ENCODE measurements at regions of chr3 and their contacts with region 1.

Region 1: GRCh38 chr3:136734382-136735070 is 17.7 kb downstream of the STAG1 start:
- DNase-seq: peak in 1 of 9 donors; percentile 8
- ATAC-seq: peak; percentile 54
- H3K4me3 ChIP-seq: no peak overlapping the region
- H3K4me3 Mint-ChIP-seq: peak overlapping the region in 5 of 10 donors; percentile 2 to 40 (median 26)
- H3K27ac ChIP-seq: no peak overlapping the region
- H3K27ac Mint-ChIP-seq: peak overlapping the region in 7 of 9 donors; percentile 1 to 83 (median 32)
- H3K4me1 ChIP-seq: peaks cover 20 to 37% of the 10 kb centered on the region in 2 donors
- H3K4me1 Mint-ChIP-seq: peaks cover 43 to 79% (median 62%) of the 10 kb centered on the region in 7 donors
- H3K27me3 ChIP-seq: no peaks in the 10 kb centered on the region
- H3K27me3 Mint-ChIP-seq: no peaks in the 10 kb centered on the region

Region 2: DNA sequence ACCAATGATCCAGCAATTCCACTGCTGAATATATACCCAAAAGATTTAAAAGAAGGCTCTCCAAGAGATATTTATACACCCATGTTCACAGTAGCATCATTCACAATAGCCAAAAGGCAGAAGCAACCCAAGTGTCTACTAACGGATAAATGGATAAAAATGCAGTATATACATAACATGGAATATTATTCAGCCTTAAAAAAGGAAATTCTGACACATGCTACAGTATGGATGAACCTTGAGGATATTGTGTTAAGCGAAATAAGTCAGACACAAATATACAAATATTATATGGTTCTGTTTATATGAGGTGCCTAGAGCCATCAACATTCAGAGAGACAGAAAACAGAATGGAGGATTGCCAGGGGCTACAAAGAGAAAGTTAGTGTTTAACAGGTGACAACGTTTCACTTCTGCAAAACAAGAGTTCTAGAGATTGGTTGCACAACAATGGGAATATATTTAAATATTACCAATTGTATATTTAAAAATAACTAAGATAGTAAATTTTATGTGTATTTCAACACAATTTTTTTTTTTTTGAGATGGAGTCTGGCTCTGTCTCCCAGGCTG is 51.7 kb before region 1 on chr3:
- CTCF ChIA-PET with region 1: no interaction called
- POLR2A ChIA-PET with region 1: no interaction called
- intact Hi-C with region 1: loop called in 1 of 2 experiments (anchors 5 kb)
- DNase-seq: no peak
- ATAC-seq: no peak
- H3K4me3 ChIP-seq: no peak overlapping the region
- H3K4me3 Mint-ChIP-seq: no peak overlapping the region
- H3K27ac ChIP-seq: no peak overlapping the region
- H3K27ac Mint-ChIP-seq: no peak overlapping the region
- H3K4me1 ChIP-seq: no peaks in the 10 kb centered on the region
- H3K4me1 Mint-ChIP-seq: peaks cover 0 to 48% (median 47%) of the 10 kb centered on the region in 7 donors
- H3K27me3 ChIP-seq: no peaks in the 10 kb centered on the region
- H3K27me3 Mint-ChIP-seq: no peaks in the 10 kb centered on the region

Region 3: GRCh38 chr3:136745916-136746315 is 11.4 kb after region 1 on chr3:
- CTCF ChIA-PET with region 1: no interaction called
- POLR2A ChIA-PET with region 1: interaction called, 3 read pairs
- intact Hi-C with region 1: loop called in 1 of 2 experiments (anchors 2 kb)
- DNase-seq: no peak
- ATAC-seq: no peak
- H3K4me3 ChIP-seq: no peak overlapping the region
- H3K4me3 Mint-ChIP-seq: peak overlapping the region in 1 of 10 donors; percentile 45
- H3K27ac ChIP-seq: no peak overlapping the region
- H3K27ac Mint-ChIP-seq: peak overlapping the region in 4 of 9 donors; percentile 7 to 65 (median 42)
- H3K4me1 ChIP-seq: peaks cover 13 to 14% of the 10 kb centered on the region in 2 donors
- H3K4me1 Mint-ChIP-seq: peaks cover 33 to 66% (median 55%) of the 10 kb centered on the region in 7 donors
- H3K27me3 ChIP-seq: no peaks in the 10 kb centered on the region
- H3K27me3 Mint-ChIP-seq: no peaks in the 10 kb centered on the region

Region 4: DNA sequence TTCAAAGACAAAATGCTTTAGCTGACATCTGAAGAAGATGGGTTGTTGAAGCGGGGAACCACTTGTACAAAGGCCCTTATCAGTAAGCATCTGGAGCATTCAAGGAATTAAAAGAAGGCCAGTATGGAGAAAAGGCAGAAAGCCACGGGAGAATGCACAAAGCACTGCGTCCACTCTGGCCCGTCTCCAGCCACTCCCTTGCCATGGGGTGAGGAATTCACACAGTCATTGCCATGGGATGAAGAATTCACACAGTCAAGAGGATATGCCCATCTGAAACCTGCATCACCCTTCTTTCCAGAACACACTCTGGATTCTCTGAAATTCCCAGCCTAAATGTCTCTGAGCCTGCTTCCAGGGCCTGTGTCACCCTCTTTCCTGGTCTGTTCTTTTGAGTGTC is 44.3 kb after region 1 on chr3:
- CTCF ChIA-PET with region 1: no interaction called
- POLR2A ChIA-PET with region 1: no interaction called
- intact Hi-C with region 1: no loop called
- DNase-seq: no peak
- ATAC-seq: no peak
- H3K4me3 ChIP-seq: no peak overlapping the region
- H3K4me3 Mint-ChIP-seq: no peak overlapping the region
- H3K27ac ChIP-seq: no peak overlapping the region
- H3K27ac Mint-ChIP-seq: no peak overlapping the region
- H3K4me1 ChIP-seq: no peaks in the 10 kb centered on the region
- H3K4me1 Mint-ChIP-seq: no peaks in the 10 kb centered on the region
- H3K27me3 ChIP-seq: no peaks in the 10 kb centered on the region
- H3K27me3 Mint-ChIP-seq: no peaks in the 10 kb centered on the region

Measured in naive thymus-derived CD4-positive, alpha-beta T cell (primary cell).